ENCODE measurements at regions of chr12 and their contacts with region 1.

Region 1: GRCh38 chr12:129494766-129495165 is 409.1 kb downstream of the TMEM132D start:
- DNase-seq: no peak

Region 2: GRCh38 chr12:128767518-128767917 is 727.2 kb before region 1 on chr12:
- intact Hi-C with region 1: loop called in 1 of 2 experiments (anchors 5 kb)
- DNase-seq: no peak

Region 3: DNA sequence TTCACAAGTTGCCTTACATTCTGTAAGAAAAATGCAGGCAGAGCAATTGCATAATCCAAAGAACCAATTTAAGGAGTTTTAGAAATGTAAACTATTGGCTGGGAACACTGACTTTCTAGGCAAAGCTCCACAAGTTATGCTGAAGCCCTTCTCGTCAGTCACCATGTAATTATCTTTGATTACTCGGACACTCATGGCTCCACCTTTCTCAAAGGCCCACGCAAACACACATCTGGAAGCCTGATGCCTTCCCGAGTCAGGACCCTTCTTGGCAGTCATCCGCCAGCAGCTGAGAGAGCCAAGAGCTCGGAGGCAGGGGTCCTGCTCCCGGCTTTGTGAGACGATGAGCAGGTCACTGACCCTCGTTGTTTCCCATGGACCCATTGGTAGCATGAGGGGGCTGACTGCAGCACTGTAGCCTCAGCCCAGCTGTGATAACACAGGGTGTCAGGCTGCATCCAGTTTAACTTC is 206.9 kb after region 1 on chr12:
- intact Hi-C with region 1: no loop called
- DNase-seq: no peak

Measured in posterior vena cava (tissue), 2 donors.